Activated B cell treated with CpG ODN at 0.5 μM for 24 hours (primary cell): ENCODE measurements at regions of chr10 and their contacts with region 1.

Region 1: GRCh38 chr10:59830601-59831259 is 75.6 kb downstream of the CCDC6 start:
- DNase-seq: no peak
- ATAC-seq: peak; percentile 50
- H3K4me3 Mint-ChIP-seq: no peak overlapping the region
- H3K27ac Mint-ChIP-seq: no peak overlapping the region
- H3K4me1 Mint-ChIP-seq: peaks cover 69% of the 10 kb centered on the region
- H3K27me3 Mint-ChIP-seq: no peaks in the 10 kb centered on the region
- CTCF ChIP-seq: peak; percentile 21

Region 2: DNA sequence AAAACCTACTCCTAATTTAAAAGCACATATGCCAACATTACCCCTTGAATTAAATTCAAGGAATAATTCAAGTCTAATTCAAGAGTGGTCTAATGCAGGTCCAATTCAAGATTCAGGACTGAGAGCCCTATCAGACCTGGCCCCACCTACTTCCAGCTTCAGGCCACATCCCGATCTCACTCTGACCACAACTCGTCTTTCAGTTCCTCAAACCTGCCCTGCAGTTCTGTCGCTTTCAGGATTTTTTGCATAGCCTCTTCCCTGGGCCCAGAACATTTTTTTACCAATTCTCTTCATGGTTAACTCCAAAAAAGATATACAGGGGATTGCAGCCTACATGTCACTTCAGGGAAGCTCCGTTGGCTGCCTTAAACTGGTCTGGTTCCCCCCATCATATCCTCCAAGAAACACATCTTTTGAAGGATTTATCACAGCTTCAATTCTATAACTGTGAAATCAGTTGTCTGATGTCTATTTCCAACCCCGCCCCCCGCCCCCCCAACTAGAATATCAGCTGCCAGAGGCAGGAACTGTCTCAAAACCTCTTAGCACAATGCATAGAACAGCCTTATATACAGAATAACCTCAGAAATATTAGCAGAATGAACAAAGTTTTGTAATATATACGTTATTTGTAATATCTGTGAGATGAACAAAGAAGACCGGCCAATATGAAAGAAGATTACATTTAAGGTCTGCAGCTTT is 54.9 kb after region 1 on chr10:
- CTCF ChIA-PET with region 1: interaction called, 3 read pairs
- POLR2A ChIA-PET with region 1: no interaction called
- intact Hi-C with region 1: loop called (anchors 1 kb)
- DNase-seq: peak; percentile 69
- ATAC-seq: peak; percentile 89
- H3K4me3 Mint-ChIP-seq: peak overlapping the region; percentile 45
- H3K27ac Mint-ChIP-seq: peak overlapping the region; percentile 68
- H3K4me1 Mint-ChIP-seq: peaks cover 87% of the 10 kb centered on the region
- H3K27me3 Mint-ChIP-seq: no peaks in the 10 kb centered on the region
- CTCF ChIP-seq: no peak

Region 3: GRCh38 chr10:59970396-59971368 is 140.0 kb after region 1 on chr10:
- CTCF ChIA-PET with region 1: no interaction called
- POLR2A ChIA-PET with region 1: no interaction called
- intact Hi-C with region 1: loop called (anchors 2 kb)
- DNase-seq: no peak
- ATAC-seq: peak; percentile 83
- H3K4me3 Mint-ChIP-seq: no peak overlapping the region
- H3K27ac Mint-ChIP-seq: no peak overlapping the region
- H3K4me1 Mint-ChIP-seq: peaks cover 5% of the 10 kb centered on the region
- H3K27me3 Mint-ChIP-seq: no peaks in the 10 kb centered on the region
- CTCF ChIP-seq: no peak

Region 4: DNA sequence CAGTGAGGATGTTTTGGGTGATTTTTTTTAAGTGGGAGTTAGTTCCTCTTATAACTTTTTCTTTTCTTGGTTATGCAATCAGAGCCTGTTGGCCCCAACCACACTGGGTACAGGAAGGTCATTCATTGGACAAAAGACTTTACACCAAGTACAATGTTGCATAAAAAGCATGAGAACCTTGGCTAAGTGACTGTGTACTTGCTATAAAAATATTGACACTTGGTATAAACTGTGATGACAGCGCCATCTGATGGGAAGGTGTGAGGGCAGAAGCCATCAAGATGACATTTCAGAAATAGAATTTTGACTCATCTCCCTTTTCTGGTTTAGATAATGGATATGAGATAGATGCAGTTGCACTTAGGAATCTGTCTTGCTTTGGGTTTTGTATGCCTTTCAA is 202.0 kb after region 1 on chr10:
- CTCF ChIA-PET with region 1: interaction called, 4 read pairs
- POLR2A ChIA-PET with region 1: no interaction called
- intact Hi-C with region 1: loop called (anchors 1 kb)
- DNase-seq: no peak
- ATAC-seq: no peak
- H3K4me3 Mint-ChIP-seq: no peak overlapping the region
- H3K27ac Mint-ChIP-seq: no peak overlapping the region
- H3K4me1 Mint-ChIP-seq: peaks cover 14% of the 10 kb centered on the region
- H3K27me3 Mint-ChIP-seq: no peaks in the 10 kb centered on the region
- CTCF ChIP-seq: no peak